Panc1 (cell line): ENCODE measurements at regions of chr20 and their contacts with region 1.

Region 1: DNA sequence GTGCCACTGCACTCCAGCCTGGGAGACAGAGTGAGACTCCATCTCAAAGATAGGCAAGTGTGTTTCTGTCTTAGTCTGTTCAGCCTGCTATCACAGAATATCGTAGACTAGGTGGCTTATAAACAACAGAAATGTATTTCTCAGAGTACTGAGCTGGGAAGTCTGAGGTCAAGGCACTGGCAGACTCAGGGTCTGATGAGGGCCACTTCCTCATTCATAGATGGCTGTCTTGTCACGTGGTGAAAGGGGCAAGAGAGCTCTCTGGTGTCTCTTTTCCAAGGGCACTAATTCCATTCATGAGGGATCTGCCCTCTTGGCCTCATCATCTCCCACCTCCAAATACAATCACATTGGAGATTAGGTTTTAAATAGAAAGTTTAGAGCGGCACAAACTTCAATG is 95.6 kb upstream of the PHACTR3 start:
- DNase-seq: no peak
- ATAC-seq: no peak
- H3K4me3 ChIP-seq: no peak overlapping the region
- H3K27ac ChIP-seq: no peak overlapping the region
- H3K4me1 ChIP-seq: no peaks in the 10 kb centered on the region
- H3K27me3 ChIP-seq: peaks cover 15% of the 10 kb centered on the region
- CTCF ChIP-seq: no peak

Region 2: GRCh38 chr20:58765780-58766179 is 742.9 kb before region 1 on chr20:
- CTCF ChIA-PET with region 1: no interaction called
- POLR2A ChIA-PET with region 1: interaction called, 18 read pairs
- in situ Hi-C with region 1: no loop called
- intact Hi-C with region 1: no loop called
- DNase-seq: no peak
- ATAC-seq: no peak
- H3K4me3 ChIP-seq: no peak overlapping the region
- H3K27ac ChIP-seq: no peak overlapping the region
- H3K4me1 ChIP-seq: no peaks in the 10 kb centered on the region
- H3K27me3 ChIP-seq: peaks cover 37% of the 10 kb centered on the region
- CTCF ChIP-seq: no peak

Region 3: DNA sequence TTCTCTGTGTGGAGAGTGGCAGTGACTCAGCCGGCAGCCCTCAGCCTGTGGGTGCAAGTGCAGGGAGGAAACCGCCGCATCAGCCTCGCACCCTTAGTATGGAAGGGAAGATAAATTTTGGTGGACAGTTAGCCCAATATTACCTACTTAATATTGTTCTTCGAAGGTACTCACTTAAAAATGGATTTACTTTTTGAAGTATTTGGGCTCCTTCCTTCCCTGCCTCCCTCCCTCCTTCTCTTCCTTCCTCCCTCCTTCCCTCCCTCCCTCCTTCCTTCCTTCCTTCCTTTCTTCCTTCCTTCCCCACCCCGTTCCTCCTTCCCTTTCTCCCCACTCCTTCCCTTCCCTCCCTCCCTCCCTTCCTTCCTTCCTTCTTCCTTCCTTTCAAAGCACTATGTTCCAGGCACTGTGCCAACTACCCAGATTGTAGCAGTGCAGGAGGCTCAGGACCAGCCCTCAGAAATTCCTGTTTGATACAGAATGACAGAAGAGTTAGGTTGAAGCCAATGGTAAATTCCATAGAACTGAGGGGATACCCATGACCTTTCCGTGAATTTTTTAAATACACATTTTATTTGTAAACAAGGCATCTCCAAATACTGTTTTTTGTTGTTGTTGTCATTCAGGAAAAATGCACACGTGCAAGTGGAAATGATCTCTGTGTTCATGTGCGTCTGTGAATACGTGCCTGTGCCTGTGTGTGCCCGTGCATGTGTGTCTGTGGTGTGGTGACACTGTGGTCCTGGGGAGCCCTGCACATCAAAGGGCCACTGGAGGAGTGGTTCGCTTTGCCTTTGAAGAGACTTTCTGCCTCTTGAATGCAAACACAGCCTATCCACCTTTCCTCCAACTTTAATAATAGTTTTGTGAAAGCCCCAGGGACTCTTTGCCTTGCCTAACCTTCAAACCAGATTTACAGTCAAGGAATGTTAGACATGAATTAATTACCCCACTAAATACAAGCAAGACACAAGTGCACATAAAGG is 66.6 kb before region 1 on chr20:
- CTCF ChIA-PET with region 1: no interaction called
- POLR2A ChIA-PET with region 1: no interaction called
- in situ Hi-C with region 1: no loop called
- intact Hi-C with region 1: no loop called
- DNase-seq: no peak
- ATAC-seq: no peak
- H3K4me3 ChIP-seq: no peak overlapping the region
- H3K27ac ChIP-seq: no peak overlapping the region
- H3K4me1 ChIP-seq: no peaks in the 10 kb centered on the region
- H3K27me3 ChIP-seq: peaks cover 14% of the 10 kb centered on the region
- CTCF ChIP-seq: no peak